ENCODE measurements at regions of chr11 and their contacts with region 1.

Region 1: GRCh38 chr11:60900507-60901404 is 5.6 kb downstream of the PRPF19 start:
- DNase-seq: no peak
- H3K4me3 ChIP-seq: no peak overlapping the region
- H3K27ac ChIP-seq: no peak overlapping the region
- H3K4me1 ChIP-seq: peaks cover 17 to 37% (median 26%) of the 10 kb centered on the region in 6 donors
- H3K27me3 ChIP-seq: no peaks in the 10 kb centered on the region
- CTCF ChIP-seq: peak in 1 of 11 experiments; percentile 8
- POLR2A ChIP-seq: no peak

Region 2: GRCh38 chr11:60647087-60647486 is 253.7 kb before region 1 on chr11:
- intact Hi-C with region 1: no loop called
- DNase-seq: no peak
- H3K4me3 ChIP-seq: no peak overlapping the region
- H3K27ac ChIP-seq: no peak overlapping the region
- H3K4me1 ChIP-seq: no peaks in the 10 kb centered on the region
- H3K27me3 ChIP-seq: peaks cover 0 to 6% (median 0%) of the 10 kb centered on the region in 7 donors
- CTCF ChIP-seq: no peak
- POLR2A ChIP-seq: no peak

Region 3: GRCh38 chr11:60756307-60757032 is 144.3 kb before region 1 on chr11 and contains the start of gene MS4A15:
- intact Hi-C with region 1: no loop called
- DNase-seq: peak; percentile 24
- H3K4me3 ChIP-seq: no peak within 1 kb of the TSS
- H3K27ac ChIP-seq: no peak within 1 kb of the TSS
- H3K4me1 ChIP-seq: peaks cover 0 to 15% (median 0%) of the 10 kb centered on the region in 6 donors
- H3K27me3 ChIP-seq: peaks cover 0 to 44% (median 0%) of the 10 kb centered on the region in 7 donors
- CTCF ChIP-seq: peak in 6 of 11 experiments; percentile 14 to 41 (median 30)
- POLR2A ChIP-seq: no peak
- total RNA-seq, gene MS4A15: not detected

Region 4: GRCh38 chr11:60841797-60842667 is 58.7 kb before region 1 on chr11 and contains the start of gene CCDC86:
- intact Hi-C with region 1: loop called (anchors 5 kb)
- DNase-seq: peak; percentile 97
- H3K4me3 ChIP-seq: peak within 1 kb of the TSS; percentile 76 to 99 (median 92)
- H3K27ac ChIP-seq: peak within 1 kb of the TSS; percentile 51 to 79 (median 72)
- H3K4me1 ChIP-seq: peaks cover 20 to 54% (median 44%) of the 10 kb centered on the region in 6 donors
- H3K27me3 ChIP-seq: no peaks in the 10 kb centered on the region
- CTCF ChIP-seq: peak in 1 of 11 experiments; percentile 19
- POLR2A ChIP-seq: peak in 1 of 3 donors; percentile 78
- total RNA-seq, gene CCDC86: 8.3 to 21.6 (median 11.3) TPM

Region 5: GRCh38 chr11:60852129-60852981 is 48.4 kb before region 1 on chr11:
- intact Hi-C with region 1: no loop called
- DNase-seq: no peak
- H3K4me3 ChIP-seq: no peak overlapping the region
- H3K27ac ChIP-seq: no peak overlapping the region
- H3K4me1 ChIP-seq: peaks cover 0 to 5% (median 0%) of the 10 kb centered on the region in 6 donors
- H3K27me3 ChIP-seq: no peaks in the 10 kb centered on the region
- CTCF ChIP-seq: no peak
- POLR2A ChIP-seq: no peak

Region 6: DNA sequence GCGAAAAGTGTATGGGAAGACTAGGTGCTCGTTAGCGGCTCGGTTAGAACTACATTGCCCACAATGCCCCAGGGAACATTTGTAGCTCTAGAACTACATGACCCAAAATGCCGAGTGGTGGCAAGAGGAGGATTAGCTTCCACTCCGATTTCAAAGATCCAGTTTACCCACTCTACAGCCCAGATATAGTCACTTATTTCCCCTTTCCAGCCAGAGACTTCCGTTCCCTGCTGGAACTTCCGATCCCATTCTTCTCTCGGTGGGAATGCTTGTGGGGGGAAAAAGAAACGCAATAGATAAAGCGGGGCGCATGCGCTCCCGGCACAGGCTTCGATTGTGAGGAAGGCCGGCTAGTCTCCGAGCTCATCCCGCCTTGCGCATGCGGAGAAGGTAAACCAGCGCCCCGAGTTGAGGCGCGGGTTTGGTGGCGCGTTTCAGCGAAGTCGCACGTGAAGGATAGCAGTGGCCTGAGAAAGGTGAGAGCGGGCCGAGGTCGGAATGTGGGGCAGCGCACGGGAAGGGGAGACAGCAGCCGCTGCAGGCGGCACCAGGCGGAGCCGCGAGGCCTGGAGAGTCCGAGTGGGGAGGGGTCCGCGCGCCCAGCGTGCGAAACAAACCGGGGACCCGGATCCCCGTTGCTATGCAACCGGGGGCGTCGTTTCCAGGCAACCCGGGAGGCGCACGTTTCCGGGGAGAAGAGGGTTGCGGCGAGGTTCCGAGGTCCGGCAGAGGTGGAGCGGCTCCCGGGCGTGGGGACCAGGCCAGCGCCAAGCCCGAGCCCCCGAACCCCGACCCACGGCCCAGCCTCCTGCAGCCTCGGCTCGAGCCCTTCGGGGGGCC is 13.3 kb after region 1 on chr11 and contains the start of gene TMEM109:
- intact Hi-C with region 1: no loop called
- DNase-seq: peak; percentile 96
- H3K4me3 ChIP-seq: peak within 1 kb of the TSS; percentile 75 to 98 (median 87)
- H3K27ac ChIP-seq: peak within 1 kb of the TSS; percentile 91 to 97 (median 96)
- H3K4me1 ChIP-seq: peaks cover 40 to 97% (median 78%) of the 10 kb centered on the region in 6 donors
- H3K27me3 ChIP-seq: no peaks in the 10 kb centered on the region
- CTCF ChIP-seq: peak in 5 of 11 experiments; percentile 6 to 27 (median 20)
- POLR2A ChIP-seq: peak in 1 of 3 donors; percentile 48
- total RNA-seq, gene TMEM109: 82.1 to 125 (median 109) TPM

Measured in spleen (tissue), 13 donors.